Posterior vena cava (tissue), 2 donors: ENCODE measurements at regions of chr1 and their contacts with region 1.

Region 1: DNA sequence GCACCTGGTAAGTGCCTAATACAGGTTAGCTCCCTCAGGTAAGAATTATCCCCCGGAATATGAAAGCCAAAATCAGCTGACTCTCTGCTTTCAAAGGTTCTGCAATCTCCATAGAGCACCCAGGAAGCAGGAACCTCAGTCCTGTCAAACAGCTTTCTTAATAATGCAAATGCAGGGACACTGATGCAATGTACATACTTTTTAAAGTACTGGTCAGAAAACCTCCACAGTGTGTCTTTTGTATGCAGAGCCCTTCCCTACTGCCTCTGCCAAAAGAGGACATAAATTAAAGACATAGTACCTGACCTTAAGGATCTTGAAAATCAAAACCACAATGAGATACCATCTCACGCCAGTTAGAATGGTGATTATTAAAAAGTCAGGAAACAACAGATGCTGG is 365.0 kb upstream of the KAZN start:
- DNase-seq: no peak

Region 2: DNA sequence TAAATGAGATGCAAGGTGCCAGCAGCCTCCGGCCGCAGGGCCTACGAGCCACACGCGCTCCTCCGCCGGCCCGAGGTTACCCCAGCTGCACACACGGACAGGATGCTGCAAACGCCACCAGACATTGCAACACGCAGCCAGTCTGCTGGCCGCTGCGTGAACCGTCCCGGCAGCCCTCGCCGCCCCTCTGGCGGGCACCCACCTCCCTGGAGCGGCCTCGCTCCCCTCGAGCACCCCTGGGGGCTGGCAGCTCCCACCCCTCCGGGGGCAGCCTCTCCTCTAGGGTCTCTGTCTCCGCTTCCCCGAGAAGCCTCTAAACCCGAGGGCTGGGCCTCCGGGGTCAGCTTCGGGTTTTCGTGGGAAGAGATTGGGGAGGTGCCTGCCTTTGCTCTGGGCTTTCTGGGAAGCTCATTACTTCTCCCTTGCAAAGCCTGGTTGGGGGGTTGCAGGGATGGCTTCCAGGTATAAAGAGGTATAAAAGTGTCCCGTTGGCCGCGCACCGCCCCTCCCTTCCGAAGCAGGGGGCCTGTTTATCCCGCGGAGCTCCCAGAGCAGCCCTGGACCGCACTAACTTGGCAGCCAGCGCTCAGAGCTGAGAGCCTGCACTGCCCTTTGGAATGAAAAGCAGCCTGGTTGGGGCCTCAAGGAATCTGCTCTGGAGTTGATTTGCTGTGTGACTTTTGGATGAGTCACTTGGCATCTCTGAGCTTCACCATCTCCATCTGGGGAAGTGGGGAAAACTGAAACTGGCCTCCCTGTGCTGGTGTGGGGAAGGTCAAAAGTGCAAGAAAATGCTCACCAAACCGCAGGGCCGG is 1637.3 kb before region 1 on chr1:
- intact Hi-C with region 1: no loop called
- DNase-seq: peak; percentile 93

Region 3: DNA sequence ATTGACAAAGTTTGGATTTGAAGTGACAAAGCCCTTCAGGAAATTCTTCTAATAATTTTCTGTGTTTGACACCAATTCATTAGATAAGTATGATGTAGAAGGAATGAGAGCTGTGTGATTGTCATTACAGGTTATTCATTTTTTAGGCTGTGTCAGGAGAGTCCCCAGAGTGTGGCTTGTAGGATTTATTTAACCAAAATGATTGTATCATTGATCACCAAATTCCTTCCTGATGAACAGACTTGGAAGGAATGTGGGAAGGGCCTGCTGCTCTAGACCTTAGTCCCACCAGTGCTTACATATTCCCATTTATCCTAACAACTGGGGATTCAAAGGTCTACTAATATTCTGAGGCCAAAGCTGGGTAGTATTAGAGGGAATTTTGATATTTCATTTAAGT is 18.4 kb before region 1 on chr1:
- intact Hi-C with region 1: no loop called
- DNase-seq: no peak

Region 4: GRCh38 chr1:14292520-14292919 is 59.0 kb after region 1 on chr1:
- intact Hi-C with region 1: loop called in 1 of 2 experiments (anchors 2 kb)
- DNase-seq: no peak